GM10248 (cell line): ENCODE measurements at regions of chr10 and their contacts with region 1.

Region 1: GRCh38 chr10:16720812-16721211 is 96.4 kb downstream of the RSU1 start:
- DNase-seq: no peak
- CTCF ChIP-seq: no peak

Region 2: GRCh38 chr10:16146993-16147392 is 573.8 kb before region 1 on chr10:
- CTCF ChIA-PET with region 1: no interaction called
- POLR2A ChIA-PET with region 1: no interaction called
- DNase-seq: no peak
- CTCF ChIP-seq: no peak

Region 3: GRCh38 chr10:16663444-16663843 is 57.4 kb before region 1 on chr10:
- CTCF ChIA-PET with region 1: no interaction called
- POLR2A ChIA-PET with region 1: no interaction called
- DNase-seq: no peak
- CTCF ChIP-seq: no peak

Region 4: GRCh38 chr10:16732376-16732775 is 11.6 kb after region 1 on chr10:
- CTCF ChIA-PET with region 1: interaction called, 19 read pairs
- POLR2A ChIA-PET with region 1: no interaction called
- DNase-seq: no peak
- CTCF ChIP-seq: no peak

Region 5: GRCh38 chr10:16745061-16745460 is 24.2 kb after region 1 on chr10:
- CTCF ChIA-PET with region 1: no interaction called
- POLR2A ChIA-PET with region 1: no interaction called
- DNase-seq: no peak
- CTCF ChIP-seq: no peak